Right ventricle myocardium superior (tissue), 1 donor: ENCODE measurements at regions of chr2 and their contacts with region 1.

Region 1: GRCh38 chr2:169824373-169825333 is at the start of gene METTL5:
- DNase-seq: peak; percentile 92
- ATAC-seq: peak; percentile 82
- total RNA-seq, gene METTL5: 69.1 TPM

Region 2: DNA sequence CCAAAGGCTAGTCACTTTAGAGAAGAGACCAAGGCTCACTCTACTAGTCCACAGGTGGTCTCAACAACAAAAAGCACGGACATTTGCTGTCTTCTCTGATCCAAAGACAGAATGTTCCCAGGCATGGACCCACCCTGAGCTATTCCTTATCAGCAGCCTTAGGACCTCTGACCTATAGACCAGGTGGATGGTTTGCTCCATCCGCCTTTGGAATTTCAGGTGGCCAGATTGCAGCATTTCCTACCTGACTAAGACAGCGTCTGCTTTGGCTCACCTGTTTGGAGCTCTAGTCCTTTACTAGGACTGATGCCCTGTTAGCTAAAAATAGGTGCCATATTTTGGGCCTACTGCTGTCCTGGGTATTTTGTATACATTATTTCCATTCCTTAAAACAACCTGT is 417.8 kb before region 1 on chr2:
- intact Hi-C with region 1: no loop called
- DNase-seq: no peak
- ATAC-seq: no peak

Region 3: GRCh38 chr2:169877398-169877797 is 52.7 kb after region 1 on chr2:
- intact Hi-C with region 1: loop called (anchors 5 kb)
- DNase-seq: no peak
- ATAC-seq: peak; percentile 73

Region 4: GRCh38 chr2:169928463-169928864 is 103.8 kb after region 1 on chr2:
- intact Hi-C with region 1: loop called (anchors 5 kb)
- DNase-seq: no peak
- ATAC-seq: no peak